ENCODE measurements at regions of chr12 and their contacts with region 1.

Region 1: GRCh38 chr12:125340791-125341190 is 275.6 kb downstream of the AACS start:
- DNase-seq: peak; percentile 64
- H3K4me3 ChIP-seq: no peak overlapping the region
- H3K27ac ChIP-seq: no peak overlapping the region
- H3K4me1 ChIP-seq: no peaks in the 10 kb centered on the region
- H3K27me3 ChIP-seq: peaks cover 4% of the 10 kb centered on the region
- CTCF ChIP-seq: no peak

Region 2: GRCh38 chr12:125183187-125184067 is 157.4 kb before region 1 on chr12:
- CTCF ChIA-PET with region 1: interaction called, 11 read pairs
- POLR2A ChIA-PET with region 1: no interaction called
- intact Hi-C with region 1: no loop called
- DNase-seq: peak; percentile 89
- H3K4me3 ChIP-seq: no peak overlapping the region
- H3K27ac ChIP-seq: no peak overlapping the region
- H3K4me1 ChIP-seq: peaks cover 31% of the 10 kb centered on the region
- H3K27me3 ChIP-seq: peaks cover 27% of the 10 kb centered on the region
- CTCF ChIP-seq: peak; percentile 99

Region 3: DNA sequence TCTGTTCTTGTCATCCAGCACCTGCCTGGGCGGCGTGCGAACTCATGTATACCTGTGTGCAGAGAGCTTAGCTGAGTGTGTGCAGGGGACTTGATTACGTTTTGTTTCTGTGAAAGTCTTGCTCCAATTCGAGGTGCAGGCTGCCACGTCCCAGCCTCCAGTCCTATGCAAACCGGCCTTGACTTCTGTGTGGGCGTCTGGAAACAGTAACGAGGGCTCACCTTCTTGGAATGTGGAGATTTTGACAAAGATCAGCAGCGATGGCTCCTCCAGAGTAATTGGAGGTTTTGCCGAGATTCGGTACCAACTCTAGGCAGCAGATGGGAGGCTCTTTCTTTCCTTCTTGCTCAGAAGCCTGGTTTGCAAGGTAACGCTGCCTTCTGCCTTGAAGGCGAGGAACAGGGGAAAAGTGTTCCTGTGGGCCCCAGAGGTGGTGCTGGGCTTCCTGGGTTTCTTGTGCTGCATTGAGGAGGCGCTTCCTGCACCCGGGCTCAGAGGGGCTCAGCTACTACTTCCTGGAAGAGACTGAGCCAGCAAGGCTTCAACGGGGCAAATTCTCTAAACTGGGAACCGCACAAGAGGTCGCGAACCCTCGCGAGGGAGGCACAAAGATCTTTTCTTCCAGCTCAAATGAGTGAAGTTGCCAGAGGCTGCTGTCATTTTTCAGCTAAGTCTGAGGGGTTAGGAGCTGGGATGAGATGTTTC is 26.6 kb before region 1 on chr12:
- CTCF ChIA-PET with region 1: no interaction called
- POLR2A ChIA-PET with region 1: no interaction called
- intact Hi-C with region 1: no loop called
- DNase-seq: no peak
- H3K4me3 ChIP-seq: no peak overlapping the region
- H3K27ac ChIP-seq: no peak overlapping the region
- H3K4me1 ChIP-seq: no peaks in the 10 kb centered on the region
- H3K27me3 ChIP-seq: no peaks in the 10 kb centered on the region
- CTCF ChIP-seq: no peak

Region 4: GRCh38 chr12:125360540-125360939 is 19.7 kb after region 1 on chr12:
- CTCF ChIA-PET with region 1: no interaction called
- POLR2A ChIA-PET with region 1: no interaction called
- intact Hi-C with region 1: no loop called
- DNase-seq: no peak
- H3K4me3 ChIP-seq: no peak overlapping the region
- H3K27ac ChIP-seq: no peak overlapping the region
- H3K4me1 ChIP-seq: no peaks in the 10 kb centered on the region
- H3K27me3 ChIP-seq: no peaks in the 10 kb centered on the region
- CTCF ChIP-seq: no peak

Measured in A673 (cell line).